Gastrocnemius medialis (tissue), 4 donors: ENCODE measurements at regions of chr10 and their contacts with region 1.

Region 1: DNA sequence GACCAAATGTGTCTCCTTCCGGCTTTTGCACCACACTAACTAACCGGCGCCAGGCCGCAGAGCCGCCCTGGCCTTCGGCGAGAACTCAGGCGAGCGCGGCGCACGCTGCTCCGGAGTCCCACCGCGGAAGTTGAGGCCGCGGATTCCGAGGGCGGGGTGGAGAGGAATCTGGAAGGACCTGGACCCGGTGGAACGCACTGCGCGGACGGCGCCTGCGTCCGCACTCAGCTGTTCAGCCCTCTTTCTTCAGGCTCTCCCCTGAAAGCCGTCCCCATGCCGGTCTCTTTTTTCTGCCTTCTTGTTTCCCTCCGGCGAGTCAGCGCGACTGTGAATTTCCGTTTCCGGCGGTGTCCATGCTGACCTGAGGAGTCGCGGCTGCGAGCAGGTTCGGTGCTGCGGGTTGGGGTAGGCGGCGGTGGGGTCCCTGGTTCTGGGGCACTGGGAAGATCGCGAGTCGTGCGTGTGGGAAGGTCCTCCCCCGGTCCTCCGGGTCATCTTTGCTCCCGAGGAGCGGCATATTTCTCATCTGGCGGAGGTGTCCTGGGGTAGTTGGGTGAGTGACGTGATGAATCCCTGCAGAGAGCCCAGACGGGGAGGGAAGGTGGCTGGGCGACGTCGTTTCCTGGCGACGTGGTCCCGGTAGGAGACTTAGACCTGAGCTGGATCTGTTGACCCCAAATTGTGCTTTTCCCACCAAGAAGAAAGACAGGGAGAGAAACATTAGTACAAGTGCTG is at the start of gene BMS1:
- DNase-seq: peak; percentile 85 to 87
- ATAC-seq: peak; percentile 100
- H3K4me3 ChIP-seq: peak within 1 kb of the TSS; percentile 71 to 80 (median 76)
- H3K27ac ChIP-seq: peak within 1 kb of the TSS; percentile 83 to 89 (median 85)
- H3K4me1 ChIP-seq: peaks cover 7 to 12% of the 10 kb centered on the region in 2 donors
- H3K27me3 ChIP-seq: no peaks in the 10 kb centered on the region
- CTCF ChIP-seq: peak in 1 of 5 experiments; percentile 7
- POLR2A ChIP-seq: peak; percentile 63 to 71
- total RNA-seq, gene BMS1: 18.7 to 26.5 (median 21.7) TPM

Region 2: GRCh38 chr10:42552493-42553407 is 229.9 kb before region 1 on chr10:
- in situ Hi-C with region 1: loop called in 2 of 4 experiments (anchors 10 kb)
- intact Hi-C with region 1: loop called (anchors 5 kb)
- DNase-seq: peak; percentile 93 to 95
- ATAC-seq: peak; percentile 99
- H3K4me3 ChIP-seq: peak overlapping the region; percentile 68 to 92 (median 80)
- H3K27ac ChIP-seq: peak overlapping the region; percentile 63 to 81 (median 75)
- H3K4me1 ChIP-seq: peaks cover 10 to 11% of the 10 kb centered on the region in 2 donors
- H3K27me3 ChIP-seq: no peaks in the 10 kb centered on the region
- CTCF ChIP-seq: no peak
- POLR2A ChIP-seq: peak; percentile 35 to 62

Region 3: DNA sequence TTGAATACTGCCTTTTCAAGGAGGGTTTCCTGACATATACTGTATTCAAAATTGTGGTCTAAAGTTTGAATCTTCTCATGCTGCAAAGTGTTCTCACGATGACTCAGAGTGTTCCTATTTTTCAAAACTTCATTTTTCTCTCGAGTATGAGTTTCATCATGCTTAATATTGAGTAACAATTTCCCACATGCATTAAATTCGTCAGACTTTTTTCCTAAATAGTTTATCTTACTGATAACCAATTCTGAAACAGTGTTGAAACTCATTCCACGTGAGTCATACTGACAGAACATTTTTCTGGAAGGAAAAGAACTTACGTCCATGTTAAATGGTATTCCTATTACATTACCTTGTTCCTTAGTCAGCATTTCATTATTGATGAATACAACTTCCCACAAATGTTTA is 188.4 kb before region 1 on chr10:
- in situ Hi-C with region 1: no loop called
- intact Hi-C with region 1: no loop called
- DNase-seq: no peak
- ATAC-seq: no peak
- H3K4me3 ChIP-seq: no peak overlapping the region
- H3K27ac ChIP-seq: no peak overlapping the region
- H3K4me1 ChIP-seq: no peaks in the 10 kb centered on the region
- H3K27me3 ChIP-seq: no peaks in the 10 kb centered on the region
- CTCF ChIP-seq: no peak
- POLR2A ChIP-seq: no peak

Region 4: DNA sequence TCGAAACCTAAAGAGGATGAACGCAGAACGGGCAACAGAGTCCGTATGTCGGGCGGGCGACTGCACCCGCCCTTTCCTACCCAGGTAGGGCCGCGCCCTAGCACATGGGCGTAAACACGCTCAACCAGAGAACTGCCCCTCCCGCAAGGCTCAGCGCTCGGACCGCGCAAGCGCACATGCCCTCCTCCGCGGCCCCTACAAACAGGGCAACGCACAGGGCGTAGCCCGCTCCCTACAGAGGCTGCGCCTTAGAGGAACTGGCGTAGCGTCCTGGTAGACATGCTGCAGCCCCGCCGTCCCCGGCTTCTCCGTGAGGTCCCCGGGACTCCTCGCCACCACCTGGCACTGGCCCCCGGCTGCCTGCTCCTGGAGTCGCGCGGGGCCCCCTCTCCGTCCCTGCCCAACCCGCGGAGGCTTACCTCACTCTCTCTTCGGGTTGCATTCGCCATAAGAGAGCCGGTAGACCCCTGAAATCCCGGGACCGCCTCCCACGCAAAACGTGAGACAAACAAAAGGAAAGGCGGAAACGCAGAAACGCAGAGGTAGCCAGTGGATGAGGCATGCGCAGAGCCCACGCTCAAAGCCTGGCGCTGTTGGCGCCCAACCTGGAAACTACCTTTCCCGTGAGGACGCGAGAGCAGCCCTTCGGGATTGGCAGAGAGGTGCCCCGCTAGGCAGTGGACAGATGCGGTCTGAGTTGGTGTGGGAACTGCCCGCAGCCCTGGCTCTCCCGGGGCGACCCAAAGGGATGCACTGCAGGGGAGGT is 144.4 kb before region 1 on chr10 and contains the start of gene ZNF33B:
- in situ Hi-C with region 1: no loop called
- intact Hi-C with region 1: loop called (anchors 1 kb)
- DNase-seq: peak; percentile 84 to 88
- ATAC-seq: peak; percentile 94 to 98
- H3K4me3 ChIP-seq: peak within 1 kb of the TSS; percentile 77 to 98 (median 91)
- H3K27ac ChIP-seq: peak within 1 kb of the TSS; percentile 89 to 96 (median 91)
- H3K4me1 ChIP-seq: peaks cover 12 to 14% of the 10 kb centered on the region in 2 donors
- H3K27me3 ChIP-seq: no peaks in the 10 kb centered on the region
- CTCF ChIP-seq: no peak
- POLR2A ChIP-seq: peak in 1 of 2 donors; percentile 55
- total RNA-seq, gene ZNF33B: 2.7 to 5.8 (median 3.7) TPM

Region 5: DNA sequence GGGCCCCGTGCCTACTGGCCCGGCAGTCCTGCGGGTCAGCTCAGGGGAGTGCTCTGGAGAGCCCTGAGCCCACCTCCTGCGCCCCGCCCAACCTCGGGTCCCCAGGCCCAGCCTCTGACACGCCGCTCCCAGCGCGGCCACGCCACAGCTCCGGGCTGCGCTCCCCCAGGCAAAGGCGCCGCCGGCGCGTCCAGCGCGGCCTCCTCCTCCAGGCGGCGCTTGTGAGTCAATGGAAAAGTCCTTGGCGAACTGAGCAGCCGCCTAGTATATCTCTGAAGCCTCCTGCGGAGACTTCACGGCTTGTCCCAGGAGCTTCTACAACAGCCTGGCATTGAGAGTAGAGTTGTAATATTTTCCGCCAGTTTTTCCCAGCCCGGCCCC is 29.5 kb before region 1 on chr10:
- in situ Hi-C with region 1: no loop called
- intact Hi-C with region 1: loop called (anchors 1 kb)
- DNase-seq: peak; percentile 26 to 42
- ATAC-seq: peak; percentile 90 to 92
- H3K4me3 ChIP-seq: peak overlapping the region; percentile 56 to 74 (median 61)
- H3K27ac ChIP-seq: peak overlapping the region in 1 of 4 donors; percentile 18
- H3K4me1 ChIP-seq: peaks cover 7 to 24% of the 10 kb centered on the region in 2 donors
- H3K27me3 ChIP-seq: peaks cover 26 to 58% (median 50%) of the 10 kb centered on the region in 3 donors
- CTCF ChIP-seq: peak; percentile 56 to 78 (median 72)
- POLR2A ChIP-seq: no peak

Region 6: GRCh38 chr10:42809670-42810069 is 27.1 kb after region 1 on chr10:
- in situ Hi-C with region 1: no loop called
- intact Hi-C with region 1: loop called (anchors 1 kb)
- DNase-seq: no peak
- ATAC-seq: no peak
- H3K4me3 ChIP-seq: no peak overlapping the region
- H3K27ac ChIP-seq: no peak overlapping the region
- H3K4me1 ChIP-seq: no peaks in the 10 kb centered on the region
- H3K27me3 ChIP-seq: no peaks in the 10 kb centered on the region
- CTCF ChIP-seq: no peak
- POLR2A ChIP-seq: no peak